Activated CD8-positive, alpha-beta memory T cell treated with anti-CD3 and anti-CD28 coated beads, Interleukin-2, amount 10 ng/mL, durations not matched to agents 7 days and 5 days (primary cell): ENCODE measurements at regions of chr6 and their contacts with region 1.

Region 1: DNA sequence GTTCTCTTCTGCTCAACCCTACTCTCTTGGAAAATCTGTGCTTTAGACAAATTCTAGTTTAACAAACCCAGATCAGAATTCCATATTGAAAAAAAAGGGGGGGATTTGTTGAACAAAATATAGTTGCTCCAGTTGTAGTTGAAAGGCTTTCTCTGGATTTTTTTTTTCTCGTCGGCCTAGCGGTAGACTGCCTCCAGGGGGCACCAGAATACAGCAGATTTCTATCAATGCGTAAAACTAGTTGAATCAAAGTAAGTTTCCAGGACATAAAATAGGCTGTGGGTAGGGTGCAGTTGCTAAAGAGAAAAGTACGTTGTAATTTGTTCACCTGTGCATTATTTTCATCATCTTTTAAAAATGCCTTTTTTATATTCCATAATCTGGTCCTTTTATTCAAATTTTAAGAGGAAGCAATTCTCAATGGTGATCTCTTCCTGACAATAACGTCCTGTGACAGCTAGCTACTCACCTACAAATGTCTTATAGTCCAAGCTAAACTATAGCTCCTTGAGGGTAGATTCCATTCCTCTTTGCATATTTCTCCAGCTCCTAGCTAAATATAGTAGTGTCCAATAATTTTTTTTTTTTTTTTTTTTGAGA is 105.4 kb downstream of the PERP start:
- DNase-seq: peak; percentile 77
- ATAC-seq: no peak
- H3K4me3 Mint-ChIP-seq: no peak overlapping the region
- H3K27ac Mint-ChIP-seq: no peak overlapping the region
- H3K4me1 Mint-ChIP-seq: peaks cover 11% of the 10 kb centered on the region
- H3K27me3 Mint-ChIP-seq: peaks cover 3% of the 10 kb centered on the region

Region 2: GRCh38 chr6:137989664-137990063 is 12.2 kb before region 1 on chr6:
- CTCF ChIA-PET with region 1: interaction called, 11 read pairs
- DNase-seq: no peak
- ATAC-seq: no peak
- H3K4me3 Mint-ChIP-seq: no peak overlapping the region
- H3K27ac Mint-ChIP-seq: no peak overlapping the region
- H3K4me1 Mint-ChIP-seq: no peaks in the 10 kb centered on the region
- H3K27me3 Mint-ChIP-seq: peaks cover 19% of the 10 kb centered on the region

Region 3: GRCh38 chr6:138109042-138109997 is 107.5 kb after region 1 on chr6:
- CTCF ChIA-PET with region 1: interaction called, 79 read pairs
- DNase-seq: peak; percentile 87
- ATAC-seq: no peak
- H3K4me3 Mint-ChIP-seq: no peak overlapping the region
- H3K27ac Mint-ChIP-seq: no peak overlapping the region
- H3K4me1 Mint-ChIP-seq: peaks cover 28% of the 10 kb centered on the region
- H3K27me3 Mint-ChIP-seq: peaks cover 24% of the 10 kb centered on the region